ENCODE measurements at regions of chr3 and their contacts with region 1.

Region 1: DNA sequence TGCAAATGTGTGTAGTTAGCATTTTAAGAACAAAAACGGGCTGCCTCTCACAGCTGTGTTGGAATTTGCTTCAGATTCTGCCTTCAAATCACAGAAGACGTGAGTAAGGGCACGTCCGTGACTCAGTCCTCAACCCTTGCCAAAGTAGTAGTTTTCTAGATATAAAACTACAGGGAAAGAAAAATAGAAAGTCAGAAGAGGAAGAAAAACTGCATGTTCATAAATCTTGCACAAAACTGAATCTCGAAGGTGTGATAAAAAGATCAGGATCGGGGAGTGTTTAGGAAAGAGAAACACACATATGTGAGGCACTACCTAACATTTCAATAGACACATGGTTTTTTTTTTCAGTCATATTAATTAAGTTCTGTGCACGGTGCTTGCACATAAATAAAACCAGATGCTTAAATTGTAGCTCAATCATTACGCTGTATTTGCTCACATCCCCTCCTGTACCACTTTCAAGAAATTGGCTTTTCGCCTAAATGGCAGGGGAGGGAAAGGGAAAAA is 71.7 kb downstream of the P3H2 start:
- DNase-seq: peak; percentile 49
- H3K4me3 Mint-ChIP-seq: peak overlapping the region; percentile 67
- H3K27ac Mint-ChIP-seq: peak overlapping the region; percentile 77
- H3K4me1 Mint-ChIP-seq: peaks cover 32% of the 10 kb centered on the region
- H3K27me3 Mint-ChIP-seq: no peaks in the 10 kb centered on the region
- CTCF ChIP-seq: no peak

Region 2: GRCh38 chr3:190064112-190064511 is 15.1 kb after region 1 on chr3:
- CTCF ChIA-PET with region 1: interaction called, 5 read pairs
- POLR2A ChIA-PET with region 1: interaction called, 32 read pairs
- intact Hi-C with region 1: no loop called
- DNase-seq: peak; percentile 85
- H3K4me3 Mint-ChIP-seq: no peak overlapping the region
- H3K27ac Mint-ChIP-seq: peak overlapping the region; percentile 79
- H3K4me1 Mint-ChIP-seq: no peaks in the 10 kb centered on the region
- H3K27me3 Mint-ChIP-seq: no peaks in the 10 kb centered on the region
- CTCF ChIP-seq: no peak